Calu3 (cell line): ENCODE measurements at regions of chr9 and their contacts with region 1.

Region 1: GRCh38 chr9:21677834-21678233 is 124.6 kb upstream of the MTAP start:
- DNase-seq: no peak
- H3K4me3 Mint-ChIP-seq: no peak overlapping the region
- H3K27ac Mint-ChIP-seq: peak overlapping the region; percentile 95
- H3K4me1 Mint-ChIP-seq: peaks cover 34% of the 10 kb centered on the region
- H3K27me3 Mint-ChIP-seq: no peaks in the 10 kb centered on the region
- CTCF ChIP-seq: no peak

Region 2: GRCh38 chr9:21559424-21560280 is 118.2 kb before region 1 on chr9:
- CTCF ChIA-PET with region 1: interaction called, 4 read pairs
- intact Hi-C with region 1: loop called (anchors 2 kb)
- DNase-seq: peak; percentile 88
- H3K4me3 Mint-ChIP-seq: peak overlapping the region; percentile 85
- H3K27ac Mint-ChIP-seq: peak overlapping the region; percentile 98
- H3K4me1 Mint-ChIP-seq: peaks cover 10% of the 10 kb centered on the region
- H3K27me3 Mint-ChIP-seq: no peaks in the 10 kb centered on the region
- CTCF ChIP-seq: no peak